ENCODE measurements at regions of chrX and their contacts with region 1.

Region 1: DNA sequence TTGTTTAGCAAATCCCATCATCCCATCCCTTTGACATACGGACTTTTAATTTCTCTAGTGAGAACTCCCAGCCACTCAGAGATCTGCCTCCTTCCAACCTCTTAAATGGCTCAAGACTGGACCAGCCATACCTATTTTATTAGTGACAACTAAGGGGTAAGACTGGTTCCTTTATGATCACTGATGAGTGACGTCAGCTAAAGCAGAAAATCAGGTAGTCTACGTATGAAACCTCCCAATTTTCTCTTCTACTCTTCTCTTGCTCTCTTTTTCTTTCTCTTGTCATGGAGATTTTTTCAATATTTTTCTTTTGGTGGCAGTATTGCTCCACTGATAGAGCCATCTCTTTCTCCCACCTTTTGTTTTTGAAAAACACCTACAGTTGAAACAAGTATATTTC is 265.0 kb downstream of the MAGEE1 start:
- DNase-seq: no peak
- ATAC-seq: no peak
- H3K4me3 ChIP-seq: no peak overlapping the region
- H3K4me3 Mint-ChIP-seq: no peak overlapping the region
- H3K27ac ChIP-seq: no peak overlapping the region
- H3K27ac Mint-ChIP-seq: no peak overlapping the region
- H3K4me1 ChIP-seq: no peaks in the 10 kb centered on the region
- H3K4me1 Mint-ChIP-seq: no peaks in the 10 kb centered on the region
- H3K27me3 ChIP-seq: no peaks in the 10 kb centered on the region
- H3K27me3 Mint-ChIP-seq: peaks cover 0 to 13% of the 10 kb centered on the region in 2 donors

Region 2: DNA sequence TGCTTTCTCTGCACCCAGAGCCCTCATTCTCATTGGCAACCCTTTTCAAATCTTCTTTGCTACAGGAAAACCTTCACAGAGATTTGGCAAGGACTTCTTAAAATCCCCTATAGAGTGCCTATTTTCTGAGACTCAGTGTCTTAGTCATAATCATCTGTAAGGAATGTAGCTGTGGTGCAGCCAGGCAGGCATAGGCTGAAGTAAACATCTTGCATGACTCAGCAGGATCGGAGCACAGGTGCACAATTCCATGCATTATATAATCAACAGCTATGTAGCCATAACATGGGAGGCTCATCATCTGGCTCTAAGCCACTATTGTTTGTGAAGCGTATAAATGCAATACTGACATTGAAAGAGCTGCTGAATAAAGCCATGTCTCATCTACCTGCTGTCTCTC is 103.8 kb after region 1 on chrX:
- CTCF ChIA-PET with region 1: interaction called in 1 of 2 experiments, 10 read pairs
- POLR2A ChIA-PET with region 1: no interaction called
- DNase-seq: no peak
- ATAC-seq: no peak
- H3K4me3 ChIP-seq: no peak overlapping the region
- H3K4me3 Mint-ChIP-seq: no peak overlapping the region
- H3K27ac ChIP-seq: no peak overlapping the region
- H3K27ac Mint-ChIP-seq: no peak overlapping the region
- H3K4me1 ChIP-seq: no peaks in the 10 kb centered on the region
- H3K4me1 Mint-ChIP-seq: no peaks in the 10 kb centered on the region
- H3K27me3 ChIP-seq: no peaks in the 10 kb centered on the region
- H3K27me3 Mint-ChIP-seq: no peaks in the 10 kb centered on the region

Measured in T-cell (primary cell).